Tibial artery (tissue), 4 donors: ENCODE measurements at regions of chr6 and their contacts with region 1.

Region 1: DNA sequence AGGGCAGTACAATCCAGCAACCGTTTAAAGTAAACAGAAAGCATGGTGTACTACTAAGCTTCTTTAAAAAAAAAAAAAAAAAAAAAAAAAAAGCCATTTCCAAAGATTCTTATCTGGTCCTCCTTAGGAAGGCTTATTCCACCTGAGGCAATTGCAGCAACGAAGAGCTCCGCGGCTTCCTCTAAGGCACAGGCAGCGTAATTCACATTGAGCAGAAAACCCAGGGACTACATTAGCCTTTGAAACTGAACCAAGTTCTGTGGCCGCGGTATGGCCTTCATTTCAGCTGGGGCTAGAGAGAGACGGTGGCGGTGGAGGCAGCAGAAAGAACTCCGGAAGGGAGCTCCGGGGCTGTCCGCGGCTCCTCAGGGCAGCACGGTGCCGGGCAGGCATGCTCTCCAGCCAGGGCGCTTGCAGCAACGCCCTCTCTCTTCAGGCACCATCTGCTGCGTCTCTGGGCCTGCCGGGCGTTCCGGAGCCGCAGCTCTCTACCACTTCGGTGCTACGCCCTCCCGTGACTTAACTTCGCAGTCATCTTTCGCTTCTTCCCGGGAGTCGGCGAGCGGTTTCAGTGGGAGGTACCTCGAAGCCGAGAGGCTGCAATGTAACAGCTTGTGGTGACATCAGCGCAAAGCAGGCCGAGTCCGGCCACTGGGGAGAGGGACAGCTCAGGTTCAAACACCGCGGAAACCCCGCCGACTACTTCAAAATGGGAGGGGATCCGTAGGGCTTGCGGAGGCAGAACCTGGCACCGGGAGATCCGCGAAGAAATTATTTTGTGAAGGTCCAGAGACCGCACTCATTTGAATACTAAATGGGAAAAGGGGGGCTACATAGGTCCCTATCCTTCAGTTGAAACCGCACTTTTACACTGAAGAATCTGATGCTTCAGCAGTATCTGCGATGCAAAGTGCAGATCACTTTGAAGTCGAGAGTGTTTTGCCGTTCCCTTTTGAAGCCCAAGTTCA is 100.0 kb downstream of the DST start:
- DNase-seq: peak; percentile 97 to 98
- H3K4me3 ChIP-seq: peak overlapping the region; percentile 71 to 78
- H3K27ac ChIP-seq: peak overlapping the region; percentile 92 to 93
- H3K4me1 ChIP-seq: peaks cover 0 to 47% (median 7%) of the 10 kb centered on the region in 4 donors
- H3K27me3 ChIP-seq: no peaks in the 10 kb centered on the region
- CTCF ChIP-seq: peak in 1 of 2 experiments; percentile 40

Region 2: DNA sequence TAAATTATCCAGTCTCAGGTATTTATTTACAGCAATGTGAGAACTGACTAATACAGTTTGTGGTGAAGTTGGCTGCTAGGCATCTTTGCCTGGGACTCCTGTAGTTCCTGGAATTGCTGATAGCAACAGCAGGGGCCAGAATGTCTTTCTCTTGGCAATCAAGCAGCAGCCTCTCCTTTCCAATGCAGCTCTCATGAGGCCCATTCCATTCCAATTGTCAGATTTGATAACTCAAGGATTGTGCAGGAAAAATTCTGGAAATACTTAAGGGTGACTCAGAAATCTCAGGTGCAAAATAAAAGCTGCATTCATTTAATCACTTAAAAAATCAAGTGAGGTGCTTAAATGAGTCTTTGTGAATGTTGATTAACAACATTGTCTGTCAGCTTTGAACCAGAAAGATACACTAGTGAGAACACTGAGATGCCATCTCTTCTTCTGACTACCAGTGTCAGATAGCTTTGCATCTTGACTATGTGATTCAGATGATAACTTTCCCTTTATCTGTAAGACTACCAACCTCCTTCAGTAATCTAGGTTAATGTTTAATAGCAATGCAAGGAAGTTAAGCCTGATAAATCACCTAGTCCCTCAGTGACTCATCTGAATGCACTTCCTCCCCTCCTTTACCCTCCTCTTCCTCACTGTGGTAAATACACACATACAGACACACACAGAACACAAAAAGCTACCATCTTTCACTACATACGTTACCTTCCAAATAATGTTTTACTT is 263.1 kb before region 1 on chr6:
- intact Hi-C with region 1: no loop called
- DNase-seq: no peak
- H3K4me3 ChIP-seq: no peak overlapping the region
- H3K27ac ChIP-seq: no peak overlapping the region
- H3K4me1 ChIP-seq: no peaks in the 10 kb centered on the region
- H3K27me3 ChIP-seq: no peaks in the 10 kb centered on the region
- CTCF ChIP-seq: no peak

Region 3: DNA sequence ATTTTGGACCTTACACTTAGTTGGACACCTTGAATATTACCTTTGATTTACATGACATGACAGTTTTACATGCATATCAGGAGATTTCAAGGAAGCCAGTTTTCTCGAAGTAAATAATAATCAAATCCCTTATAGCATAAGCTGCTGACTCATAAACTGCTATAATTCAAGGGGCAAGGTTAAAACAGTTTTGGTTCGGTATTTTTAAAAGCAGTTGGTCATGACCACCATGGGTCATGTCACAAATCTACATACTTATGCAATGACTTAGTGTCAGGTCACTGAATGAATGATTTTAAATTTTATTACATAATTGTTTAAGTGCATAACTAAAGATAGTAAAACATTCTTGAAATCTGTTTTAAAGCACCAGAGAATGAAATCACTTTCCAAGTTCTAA is 58.0 kb before region 1 on chr6:
- intact Hi-C with region 1: loop called (anchors 10 kb)
- DNase-seq: no peak
- H3K4me3 ChIP-seq: no peak overlapping the region
- H3K27ac ChIP-seq: peak overlapping the region in 1 of 2 donors; percentile 9
- H3K4me1 ChIP-seq: peaks cover 0 to 20% (median 0%) of the 10 kb centered on the region in 4 donors
- H3K27me3 ChIP-seq: no peaks in the 10 kb centered on the region
- CTCF ChIP-seq: no peak

Region 4: GRCh38 chr6:56507517-56507916 is 35.1 kb before region 1 on chr6:
- intact Hi-C with region 1: loop called (anchors 2 kb)
- DNase-seq: peak; percentile 30 to 79
- H3K4me3 ChIP-seq: no peak overlapping the region
- H3K27ac ChIP-seq: peak overlapping the region; percentile 76 to 78
- H3K4me1 ChIP-seq: peaks cover 6 to 74% (median 36%) of the 10 kb centered on the region in 4 donors
- H3K27me3 ChIP-seq: no peaks in the 10 kb centered on the region
- CTCF ChIP-seq: no peak

Region 5: GRCh38 chr6:56567501-56567900 is 24.9 kb after region 1 on chr6:
- intact Hi-C with region 1: no loop called
- DNase-seq: no peak
- H3K4me3 ChIP-seq: no peak overlapping the region
- H3K27ac ChIP-seq: no peak overlapping the region
- H3K4me1 ChIP-seq: peaks cover 0 to 10% (median 0%) of the 10 kb centered on the region in 4 donors
- H3K27me3 ChIP-seq: no peaks in the 10 kb centered on the region
- CTCF ChIP-seq: no peak

Region 6: GRCh38 chr6:56699066-56699654 is 156.5 kb after region 1 on chr6:
- intact Hi-C with region 1: loop called (anchors 5 kb)
- DNase-seq: no peak
- H3K4me3 ChIP-seq: no peak overlapping the region
- H3K27ac ChIP-seq: no peak overlapping the region
- H3K4me1 ChIP-seq: peaks cover 0 to 17% (median 5%) of the 10 kb centered on the region in 4 donors
- H3K27me3 ChIP-seq: no peaks in the 10 kb centered on the region
- CTCF ChIP-seq: peak; percentile 52 to 64

Region 7: GRCh38 chr6:56862415-56863175 is 319.9 kb after region 1 on chr6:
- intact Hi-C with region 1: no loop called
- DNase-seq: no peak
- H3K4me3 ChIP-seq: peak overlapping the region; percentile 14 to 16
- H3K27ac ChIP-seq: peak overlapping the region in 1 of 2 donors; percentile 31
- H3K4me1 ChIP-seq: peaks cover 0 to 21% (median 7%) of the 10 kb centered on the region in 4 donors
- H3K27me3 ChIP-seq: no peaks in the 10 kb centered on the region
- CTCF ChIP-seq: no peak

Region 8: GRCh38 chr6:57316581-57317059 is 774.0 kb after region 1 on chr6:
- intact Hi-C with region 1: no loop called
- DNase-seq: peak; percentile 82 to 86
- H3K4me3 ChIP-seq: peak overlapping the region; percentile 61 to 67
- H3K27ac ChIP-seq: peak overlapping the region; percentile 35 to 66
- H3K4me1 ChIP-seq: peaks cover 0 to 38% (median 13%) of the 10 kb centered on the region in 4 donors
- H3K27me3 ChIP-seq: no peaks in the 10 kb centered on the region
- CTCF ChIP-seq: peak; percentile 78 to 80